ENCODE measurements at regions of chr1 and their contacts with region 1.

Region 1: DNA sequence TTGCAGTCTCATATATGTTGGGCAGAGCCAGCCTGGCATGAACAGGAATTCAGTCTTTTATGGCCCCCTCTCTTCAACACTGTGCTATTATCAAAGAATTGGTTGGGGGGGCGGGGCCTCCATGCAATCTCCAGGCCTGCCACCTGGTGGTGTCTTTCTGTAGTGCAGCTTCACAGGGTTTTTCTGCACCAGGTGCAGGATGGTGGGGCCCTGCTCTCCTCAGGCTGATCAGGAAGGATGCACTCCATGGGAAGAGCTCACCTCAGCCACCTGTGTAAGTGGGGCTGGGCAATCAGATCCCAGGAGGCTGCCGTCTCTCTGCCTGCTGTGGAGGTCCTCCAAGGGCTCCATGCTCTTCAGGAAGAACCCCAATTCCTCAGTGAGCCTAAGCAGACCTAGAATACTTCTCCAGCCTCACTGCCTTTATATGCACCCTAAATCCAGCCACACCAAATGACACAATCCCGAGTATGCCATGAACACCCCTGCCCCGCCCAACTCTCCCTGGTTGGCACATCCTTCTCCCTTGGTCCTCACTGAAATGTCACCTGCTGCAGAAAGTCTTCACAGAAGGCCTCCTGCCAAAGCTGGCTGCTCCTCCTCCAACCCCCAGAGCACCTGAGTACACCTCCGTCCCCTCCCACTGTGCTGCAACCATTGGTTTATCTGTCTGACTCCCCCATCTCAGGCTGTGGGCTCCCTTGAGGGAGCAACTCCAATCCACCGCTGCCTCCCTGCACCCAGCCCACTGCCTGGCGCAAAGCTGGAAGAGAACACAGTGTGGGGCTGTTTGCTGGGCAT is 16.5 kb downstream of the STK40 start:
- H3K4me3 ChIP-seq: no peak overlapping the region
- H3K27ac ChIP-seq: no peak overlapping the region
- H3K4me1 ChIP-seq: peaks cover 12% of the 10 kb centered on the region
- CTCF ChIP-seq: peak; percentile 87

Region 2: GRCh38 chr1:36279110-36279788 is 90.0 kb before region 1 on chr1:
- CTCF ChIA-PET with region 1: no interaction called
- POLR2A ChIA-PET with region 1: no interaction called
- H3K4me3 ChIP-seq: no peak overlapping the region
- H3K27ac ChIP-seq: no peak overlapping the region
- H3K4me1 ChIP-seq: peaks cover 3% of the 10 kb centered on the region; the same call in 1 of the 2 replicates
- CTCF ChIP-seq: no peak

Region 3: DNA sequence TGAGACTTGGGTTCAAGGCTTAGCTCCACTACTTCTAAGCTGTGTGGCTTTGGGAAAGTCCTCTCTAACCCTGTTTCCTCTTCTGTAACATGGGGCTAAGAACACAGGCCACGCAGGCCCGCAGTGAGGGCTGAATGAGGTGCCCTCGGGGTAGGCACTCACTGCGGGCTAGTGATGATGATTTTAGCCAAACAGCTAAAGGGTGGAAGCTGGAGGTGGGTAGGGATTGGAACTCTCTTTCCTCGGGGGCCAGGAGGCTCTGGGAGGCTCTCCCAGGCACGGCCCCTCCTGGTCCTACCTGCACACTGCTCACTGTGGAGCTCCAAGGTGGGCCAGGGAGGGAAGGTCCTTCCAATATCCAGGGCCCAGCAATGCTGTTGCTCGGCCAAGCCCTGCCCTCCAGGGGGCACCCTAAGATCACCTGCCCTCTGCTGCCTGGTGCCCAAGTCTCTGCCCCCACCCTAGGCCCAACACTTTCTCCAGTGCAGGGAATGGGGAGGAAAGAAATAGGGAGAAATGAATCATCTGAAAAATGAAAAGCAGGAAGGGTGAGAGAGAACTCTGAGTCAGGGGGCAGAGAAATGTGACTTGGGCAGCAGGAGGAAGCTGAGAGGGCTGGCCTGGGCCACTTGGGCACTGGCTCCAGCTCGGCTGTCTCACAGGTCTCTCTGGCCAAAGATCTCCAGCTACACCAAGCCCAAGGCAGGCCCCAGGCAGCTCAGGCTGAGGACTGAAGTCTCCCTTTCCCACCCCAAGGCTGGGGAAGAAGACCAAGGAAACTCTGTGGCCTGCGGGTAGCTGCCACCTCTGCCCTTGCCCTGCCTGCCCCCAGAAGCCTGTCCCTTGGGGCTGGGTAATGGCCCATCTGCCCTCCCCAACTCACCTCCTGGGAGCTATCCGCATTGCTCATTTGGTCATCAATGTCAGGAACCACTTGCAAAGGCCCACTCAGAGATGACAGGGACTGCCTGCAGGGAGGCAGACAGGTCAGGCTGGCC is 26.5 kb before region 1 on chr1:
- CTCF ChIA-PET with region 1: interaction called, 21 read pairs
- POLR2A ChIA-PET with region 1: interaction called, 4 read pairs
- H3K4me3 ChIP-seq: no peak overlapping the region
- H3K27ac ChIP-seq: no peak overlapping the region
- H3K4me1 ChIP-seq: no peaks in the 10 kb centered on the region
- CTCF ChIP-seq: peak; percentile 69; the same call in 1 of the 2 replicates

Region 4: DNA sequence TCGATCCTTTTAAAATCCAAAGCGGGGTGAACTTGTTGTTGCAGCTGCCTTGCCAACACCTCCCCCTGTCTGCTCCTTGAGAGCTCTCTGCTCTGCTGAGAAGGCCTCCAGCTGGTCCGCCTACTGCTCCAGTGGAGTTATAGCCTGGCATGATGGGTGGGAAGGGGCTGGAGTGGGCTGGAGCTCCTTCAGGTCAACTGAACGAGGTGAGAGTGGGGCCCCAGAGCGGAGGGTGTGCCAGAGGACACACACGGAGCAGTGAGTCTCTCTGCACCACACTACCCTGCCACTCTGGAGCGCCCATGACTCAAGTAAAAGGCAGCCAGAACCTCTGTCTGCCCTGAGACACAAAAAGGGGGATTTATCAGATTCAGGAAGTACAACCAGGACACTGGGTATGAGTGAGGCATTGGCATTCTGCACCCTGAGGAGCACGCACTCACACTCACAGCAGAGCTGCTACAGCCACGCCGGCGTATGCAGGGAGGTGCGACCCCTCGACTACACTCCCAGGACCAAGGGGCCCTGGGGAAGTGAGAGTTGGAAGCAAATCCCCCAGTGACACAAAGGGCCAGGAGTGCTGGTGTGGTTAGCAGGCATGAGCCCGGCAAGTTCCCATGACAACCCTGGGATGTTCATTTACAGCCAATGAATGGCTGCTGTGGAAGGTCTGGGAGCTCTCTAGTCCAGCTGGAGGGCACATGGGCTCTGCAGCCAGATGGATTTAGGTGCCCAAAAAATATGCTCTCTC is 17.9 kb before region 1 on chr1:
- CTCF ChIA-PET with region 1: interaction called, 14 read pairs
- POLR2A ChIA-PET with region 1: interaction called, 7 read pairs
- H3K4me3 ChIP-seq: no peak overlapping the region
- H3K27ac ChIP-seq: no peak overlapping the region
- H3K4me1 ChIP-seq: no peaks in the 10 kb centered on the region
- CTCF ChIP-seq: no peak

Region 5: GRCh38 chr1:36380143-36380619 is 10.9 kb after region 1 on chr1:
- CTCF ChIA-PET with region 1: interaction called, 16 read pairs
- POLR2A ChIA-PET with region 1: interaction called, 5 read pairs
- H3K4me3 ChIP-seq: no peak overlapping the region
- H3K27ac ChIP-seq: no peak overlapping the region
- H3K4me1 ChIP-seq: no peaks in the 10 kb centered on the region
- CTCF ChIP-seq: no peak

Region 6: DNA sequence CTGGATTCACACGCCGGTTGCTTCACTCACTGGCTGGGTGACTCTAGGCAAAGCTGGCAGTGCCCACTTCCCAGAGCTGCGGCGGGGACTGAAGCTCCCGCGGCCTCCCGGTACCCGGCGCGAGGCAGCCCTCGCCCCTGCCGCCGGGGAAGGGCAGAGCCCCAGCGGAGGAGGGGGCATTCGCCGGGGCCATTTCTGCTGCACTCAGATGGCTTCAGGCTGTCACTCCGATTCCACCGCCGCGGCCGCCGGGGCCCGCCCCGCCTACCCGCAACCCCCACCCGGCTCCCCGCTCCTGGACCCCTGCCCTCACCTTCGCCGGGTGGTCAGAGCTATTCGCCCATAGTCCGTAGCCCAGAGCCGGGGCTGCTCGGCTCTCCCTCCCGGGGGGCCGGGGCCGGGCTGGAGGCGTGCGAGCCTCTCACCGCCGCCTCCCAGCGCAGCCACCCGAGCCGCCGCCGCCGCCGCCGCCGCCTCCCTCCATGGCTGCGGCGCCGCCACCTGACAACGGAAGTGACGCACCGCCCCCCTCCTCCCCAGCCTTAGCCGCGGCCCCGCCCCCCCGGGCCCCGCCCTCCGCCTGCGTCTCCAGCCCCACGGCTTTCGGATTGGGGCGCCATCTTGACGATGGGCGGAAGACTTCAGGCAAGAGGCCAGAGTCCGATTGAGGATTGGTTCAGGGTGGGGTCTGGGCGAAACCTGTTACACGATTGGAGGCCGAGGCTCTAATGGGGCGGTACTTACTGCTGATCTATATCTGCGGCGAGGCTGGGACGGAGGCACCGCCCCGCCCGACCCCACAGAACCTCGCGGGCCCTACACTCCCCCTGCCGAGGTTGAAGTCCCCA is 16.4 kb after region 1 on chr1 and contains the start of gene STK40:
- CTCF ChIA-PET with region 1: interaction called, 19 read pairs
- POLR2A ChIA-PET with region 1: interaction called, 11 read pairs
- H3K4me3 ChIP-seq: peak within 1 kb of the TSS; percentile 81
- H3K27ac ChIP-seq: peak within 1 kb of the TSS; percentile 78
- H3K4me1 ChIP-seq: peaks cover 3% of the 10 kb centered on the region
- CTCF ChIP-seq: no peak

Measured in HEK293 (cell line).